ENCODE measurements at regions of chr1 and their contacts with region 1.

Region 1: GRCh38 chr1:53945433-53946251 is at the start of gene IFT25:
- DNase-seq: peak; percentile 76 to 99
- H3K4me3 ChIP-seq: peak within 1 kb of the TSS; percentile 98
- H3K27ac ChIP-seq: peak within 1 kb of the TSS; percentile 67
- H3K4me1 ChIP-seq: peaks cover 47% of the 10 kb centered on the region
- H3K27me3 ChIP-seq: no peaks in the 10 kb centered on the region
- CTCF ChIP-seq: no peak
- total RNA-seq, gene IFT25: 98.8 and 128 TPM in 2 replicates

Region 2: DNA sequence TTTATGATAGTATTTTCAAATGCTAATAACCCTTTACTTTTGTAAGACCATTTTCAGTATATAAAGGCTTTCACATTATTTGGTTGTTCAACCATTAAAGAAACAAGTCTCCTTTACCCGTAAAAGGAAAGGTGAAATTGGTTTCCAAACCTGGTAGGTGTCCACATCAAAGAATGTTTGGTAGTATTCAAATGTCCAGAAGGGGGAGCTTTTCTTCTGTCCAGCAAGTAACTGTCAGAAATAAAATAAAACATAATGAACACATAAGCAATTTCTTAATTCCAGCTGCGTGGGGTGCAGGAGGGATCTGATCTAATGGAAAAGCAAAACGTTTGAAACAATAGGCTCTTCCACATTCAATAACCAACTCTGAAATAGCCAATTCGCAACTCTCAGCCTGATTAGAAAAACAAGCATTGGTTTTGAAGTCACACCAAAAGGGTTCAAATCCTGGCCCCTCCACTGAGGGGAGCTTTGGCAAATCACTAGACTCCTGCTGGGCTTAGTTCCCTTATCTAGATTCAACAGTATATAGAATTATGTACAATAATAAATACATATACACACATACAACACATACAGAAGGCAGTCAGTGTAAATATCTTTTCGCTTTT is 67.0 kb before region 1 on chr1:
- CTCF ChIA-PET with region 1: interaction called, 3 read pairs
- POLR2A ChIA-PET with region 1: interaction called, 3 read pairs
- intact Hi-C with region 1: loop called (anchors 1 kb)
- DNase-seq: peak in 1 of 2 experiments; percentile 63
- H3K4me3 ChIP-seq: no peak overlapping the region
- H3K27ac ChIP-seq: no peak overlapping the region
- H3K4me1 ChIP-seq: no peaks in the 10 kb centered on the region
- H3K27me3 ChIP-seq: no peaks in the 10 kb centered on the region
- CTCF ChIP-seq: peak; percentile 83

Region 3: DNA sequence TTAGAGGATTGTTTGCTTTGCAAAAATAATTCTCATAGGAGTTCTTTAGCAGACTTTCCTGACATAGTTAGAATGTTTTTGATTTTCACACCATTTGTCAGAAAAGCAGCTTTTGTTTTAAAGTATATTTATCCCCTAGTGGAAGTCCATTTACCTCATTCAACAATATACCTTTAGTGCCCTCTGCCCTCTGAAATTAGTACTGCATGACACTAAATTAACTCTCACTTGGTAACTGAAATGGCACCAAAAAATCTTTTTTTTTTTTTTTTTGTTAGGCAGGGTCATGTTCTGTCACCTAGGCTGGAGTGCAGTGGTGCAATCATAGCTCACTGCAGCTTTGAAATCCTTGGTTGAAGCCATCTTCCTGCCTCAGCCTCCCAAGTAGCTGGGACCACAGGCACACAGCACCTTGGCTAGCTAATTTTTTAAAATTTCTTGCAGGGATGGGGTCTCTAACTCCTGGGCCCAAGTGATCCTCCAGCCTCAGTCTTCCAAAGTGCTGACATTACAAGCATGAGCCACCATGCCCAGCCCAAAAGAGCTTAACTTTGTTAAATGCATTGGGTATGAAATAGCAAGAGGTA is 14.1 kb after region 1 on chr1:
- CTCF ChIA-PET with region 1: interaction called, 9 read pairs
- POLR2A ChIA-PET with region 1: no interaction called
- intact Hi-C with region 1: loop called (anchors 1 kb)
- DNase-seq: no peak
- H3K4me3 ChIP-seq: no peak overlapping the region
- H3K27ac ChIP-seq: no peak overlapping the region
- H3K4me1 ChIP-seq: peaks cover 26% of the 10 kb centered on the region
- H3K27me3 ChIP-seq: no peaks in the 10 kb centered on the region
- CTCF ChIP-seq: peak; percentile 75

Region 4: DNA sequence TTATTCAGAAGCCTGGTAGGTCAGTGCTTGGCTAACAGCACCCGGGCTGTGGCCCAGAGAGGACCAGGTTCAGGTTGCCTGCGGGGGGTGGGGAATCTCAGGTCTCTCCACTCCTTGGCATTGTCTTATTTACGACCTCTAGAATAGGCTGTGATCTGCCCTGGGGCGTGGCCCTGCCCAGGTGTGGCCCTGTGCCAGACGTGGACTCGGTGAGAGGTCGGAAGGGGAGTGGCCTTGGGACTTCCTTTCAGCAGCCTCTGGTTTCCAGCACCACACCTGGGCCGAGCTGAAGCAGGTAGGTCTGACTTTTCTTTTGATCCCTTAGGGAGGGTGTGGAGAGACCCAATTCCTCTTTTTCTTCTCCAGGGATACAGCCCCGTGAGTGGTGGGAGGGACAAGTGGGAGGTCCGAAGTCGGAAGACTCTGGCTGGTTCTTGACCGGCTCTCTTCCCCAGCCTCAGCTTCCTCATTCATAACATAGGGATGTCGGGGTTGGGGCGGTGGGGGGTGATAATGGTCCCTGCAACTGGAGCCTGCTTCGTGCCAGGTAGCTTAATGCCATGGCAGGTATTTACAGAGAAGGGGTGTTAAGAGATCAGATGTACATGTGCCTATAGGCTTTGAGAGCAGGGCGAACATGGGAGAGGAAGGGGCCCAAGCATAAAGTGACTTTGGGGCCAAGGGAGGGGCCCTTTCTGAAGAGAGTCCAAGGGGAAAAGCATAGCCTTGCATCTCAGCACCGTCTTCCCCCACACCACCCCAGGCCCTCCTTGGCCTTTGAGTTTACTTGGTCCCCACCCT is 618.9 kb after region 1 on chr1:
- CTCF ChIA-PET with region 1: no interaction called
- POLR2A ChIA-PET with region 1: interaction called, 11 read pairs
- intact Hi-C with region 1: no loop called
- DNase-seq: peak; percentile 89 to 99
- H3K4me3 ChIP-seq: peak overlapping the region; percentile 44; the same call in 1 of the 2 replicates
- H3K27ac ChIP-seq: peak overlapping the region; percentile 40
- H3K4me1 ChIP-seq: peaks cover 40% of the 10 kb centered on the region
- H3K27me3 ChIP-seq: no peaks in the 10 kb centered on the region
- CTCF ChIP-seq: no peak

Region 5: GRCh38 chr1:54886724-54887664 is 941.4 kb after region 1 on chr1 and contains the start of gene DHCR24:
- CTCF ChIA-PET with region 1: no interaction called
- POLR2A ChIA-PET with region 1: interaction called, 12 read pairs
- intact Hi-C with region 1: loop called (anchors 10 kb)
- DNase-seq: peak; percentile 69 to 90
- H3K4me3 ChIP-seq: peak within 1 kb of the TSS; percentile 96
- H3K27ac ChIP-seq: peak within 1 kb of the TSS; percentile 79
- H3K4me1 ChIP-seq: peaks cover 61% of the 10 kb centered on the region
- H3K27me3 ChIP-seq: no peaks in the 10 kb centered on the region
- CTCF ChIP-seq: no peak
- total RNA-seq, gene DHCR24: 195 and 369 TPM in 2 replicates

Measured in PC-9 (cell line).